CD8-positive, alpha-beta T cell (primary cell): ENCODE measurements at regions of chr5 and their contacts with region 1.

Region 1: GRCh38 chr5:59174248-59174844 is 591.5 kb downstream of the RAB3C start:
- DNase-seq: peak in 6 of 9 experiments; percentile 8 to 81 (median 30)
- ATAC-seq: peak; percentile 80
- H3K4me3 ChIP-seq: no peak overlapping the region
- H3K4me3 Mint-ChIP-seq: no peak overlapping the region
- H3K27ac ChIP-seq: no peak overlapping the region
- H3K27ac Mint-ChIP-seq: no peak overlapping the region
- H3K4me1 ChIP-seq: no peaks in the 10 kb centered on the region
- H3K4me1 Mint-ChIP-seq: no peaks in the 10 kb centered on the region
- H3K27me3 ChIP-seq: no peaks in the 10 kb centered on the region
- H3K27me3 Mint-ChIP-seq: no peaks in the 10 kb centered on the region
- CTCF ChIP-seq: peak; percentile 87

Region 2: GRCh38 chr5:58972301-58972700 is 202.0 kb before region 1 on chr5:
- CTCF ChIA-PET with region 1: interaction called, 5 read pairs
- POLR2A ChIA-PET with region 1: no interaction called
- intact Hi-C with region 1: loop called (anchors 5 kb)
- DNase-seq: no peak
- ATAC-seq: no peak
- H3K4me3 ChIP-seq: no peak overlapping the region
- H3K4me3 Mint-ChIP-seq: no peak overlapping the region
- H3K27ac ChIP-seq: no peak overlapping the region
- H3K27ac Mint-ChIP-seq: no peak overlapping the region
- H3K4me1 ChIP-seq: no peaks in the 10 kb centered on the region
- H3K4me1 Mint-ChIP-seq: no peaks in the 10 kb centered on the region
- H3K27me3 ChIP-seq: no peaks in the 10 kb centered on the region
- H3K27me3 Mint-ChIP-seq: no peaks in the 10 kb centered on the region
- CTCF ChIP-seq: no peak

Region 3: GRCh38 chr5:58999804-59000595 is 174.3 kb before region 1 on chr5:
- CTCF ChIA-PET with region 1: interaction called, 12 read pairs
- POLR2A ChIA-PET with region 1: no interaction called
- intact Hi-C with region 1: no loop called
- DNase-seq: no peak
- ATAC-seq: no peak
- H3K4me3 ChIP-seq: no peak overlapping the region
- H3K4me3 Mint-ChIP-seq: no peak overlapping the region
- H3K27ac ChIP-seq: no peak overlapping the region
- H3K27ac Mint-ChIP-seq: no peak overlapping the region
- H3K4me1 ChIP-seq: peaks cover 5% of the 10 kb centered on the region
- H3K4me1 Mint-ChIP-seq: peaks cover 59% of the 10 kb centered on the region
- H3K27me3 ChIP-seq: no peaks in the 10 kb centered on the region
- H3K27me3 Mint-ChIP-seq: no peaks in the 10 kb centered on the region
- CTCF ChIP-seq: no peak

Region 4: GRCh38 chr5:59126708-59127573 is 47.4 kb before region 1 on chr5:
- CTCF ChIA-PET with region 1: interaction called, 35 read pairs
- POLR2A ChIA-PET with region 1: interaction called, 7 read pairs
- intact Hi-C with region 1: loop called (anchors 1 to 5 kb)
- DNase-seq: peak in 3 of 9 experiments; percentile 7 to 73 (median 59)
- ATAC-seq: no peak
- H3K4me3 ChIP-seq: peak overlapping the region; percentile 37 to 49
- H3K4me3 Mint-ChIP-seq: no peak overlapping the region
- H3K27ac ChIP-seq: peak overlapping the region; percentile 19 to 82
- H3K27ac Mint-ChIP-seq: no peak overlapping the region
- H3K4me1 ChIP-seq: peaks cover 67% of the 10 kb centered on the region
- H3K4me1 Mint-ChIP-seq: peaks cover 14% of the 10 kb centered on the region
- H3K27me3 ChIP-seq: no peaks in the 10 kb centered on the region
- H3K27me3 Mint-ChIP-seq: no peaks in the 10 kb centered on the region
- CTCF ChIP-seq: no peak

Region 5: GRCh38 chr5:59161221-59162105 is 12.9 kb before region 1 on chr5:
- CTCF ChIA-PET with region 1: interaction called, 11 read pairs
- POLR2A ChIA-PET with region 1: no interaction called
- intact Hi-C with region 1: no loop called
- DNase-seq: peak in 2 of 9 experiments; percentile 8 to 56
- ATAC-seq: peak; percentile 66
- H3K4me3 ChIP-seq: no peak overlapping the region
- H3K4me3 Mint-ChIP-seq: no peak overlapping the region
- H3K27ac ChIP-seq: no peak overlapping the region
- H3K27ac Mint-ChIP-seq: peak overlapping the region; percentile 16
- H3K4me1 ChIP-seq: peaks cover 8% of the 10 kb centered on the region
- H3K4me1 Mint-ChIP-seq: peaks cover 12% of the 10 kb centered on the region
- H3K27me3 ChIP-seq: no peaks in the 10 kb centered on the region
- H3K27me3 Mint-ChIP-seq: no peaks in the 10 kb centered on the region
- CTCF ChIP-seq: no peak

Region 6: GRCh38 chr5:59275510-59276324 is 101.4 kb after region 1 on chr5:
- CTCF ChIA-PET with region 1: no interaction called
- POLR2A ChIA-PET with region 1: no interaction called
- intact Hi-C with region 1: no loop called
- DNase-seq: no peak
- ATAC-seq: no peak
- H3K4me3 ChIP-seq: no peak overlapping the region
- H3K4me3 Mint-ChIP-seq: peak overlapping the region; percentile 53
- H3K27ac ChIP-seq: no peak overlapping the region
- H3K27ac Mint-ChIP-seq: no peak overlapping the region
- H3K4me1 ChIP-seq: no peaks in the 10 kb centered on the region
- H3K4me1 Mint-ChIP-seq: peaks cover 13% of the 10 kb centered on the region
- H3K27me3 ChIP-seq: no peaks in the 10 kb centered on the region
- H3K27me3 Mint-ChIP-seq: peaks cover 15% of the 10 kb centered on the region
- CTCF ChIP-seq: no peak